ENCODE measurements at regions of chr12 and their contacts with region 1.

Region 1: DNA sequence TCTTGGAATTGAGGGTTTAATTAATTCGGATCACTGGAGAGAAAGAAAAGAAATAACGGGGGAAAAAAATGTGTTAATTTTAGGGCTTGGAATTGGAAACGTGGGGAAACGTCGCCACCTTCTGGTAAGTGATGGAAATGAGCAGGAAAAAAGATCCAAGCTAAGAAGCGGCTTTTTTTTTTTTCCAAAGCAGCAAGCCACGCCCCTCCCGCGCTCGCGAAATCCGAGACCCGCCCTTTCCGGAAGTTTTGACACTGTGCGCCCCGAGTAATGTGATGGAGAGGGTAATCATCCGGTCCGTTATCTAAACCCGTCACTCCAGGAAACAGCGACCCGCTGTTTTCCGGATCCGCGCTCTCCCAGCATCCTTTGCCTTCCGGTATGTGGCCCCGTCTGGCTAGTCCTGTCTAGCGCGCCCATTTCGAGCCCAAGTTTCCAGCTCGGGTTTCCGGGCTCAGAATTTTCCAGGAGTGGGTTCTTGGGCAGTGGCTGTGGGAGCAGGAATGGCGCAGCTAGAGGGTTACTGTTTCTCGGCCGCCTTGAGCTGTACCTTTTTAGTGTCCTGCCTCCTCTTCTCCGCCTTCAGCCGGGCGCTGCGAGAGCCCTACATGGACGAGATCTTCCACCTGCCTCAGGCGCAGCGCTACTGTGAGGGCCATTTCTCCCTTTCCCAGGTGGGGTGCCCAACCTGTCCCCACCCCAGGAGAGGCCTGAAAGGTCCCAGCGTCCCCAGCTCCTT is at the start of gene ALG10B:
- DNase-seq: peak; percentile 94
- H3K4me3 ChIP-seq: peak within 1 kb of the TSS; percentile 77 to 83 (median 83)
- H3K27ac ChIP-seq: peak within 1 kb of the TSS; percentile 70
- H3K4me1 ChIP-seq: no peaks in the 10 kb centered on the region
- H3K27me3 ChIP-seq: no peaks in the 10 kb centered on the region
- CTCF ChIP-seq: peak; percentile 38 to 56
- total RNA-seq, gene ALG10B: 7.7 to 8.5 TPM

Region 2: DNA sequence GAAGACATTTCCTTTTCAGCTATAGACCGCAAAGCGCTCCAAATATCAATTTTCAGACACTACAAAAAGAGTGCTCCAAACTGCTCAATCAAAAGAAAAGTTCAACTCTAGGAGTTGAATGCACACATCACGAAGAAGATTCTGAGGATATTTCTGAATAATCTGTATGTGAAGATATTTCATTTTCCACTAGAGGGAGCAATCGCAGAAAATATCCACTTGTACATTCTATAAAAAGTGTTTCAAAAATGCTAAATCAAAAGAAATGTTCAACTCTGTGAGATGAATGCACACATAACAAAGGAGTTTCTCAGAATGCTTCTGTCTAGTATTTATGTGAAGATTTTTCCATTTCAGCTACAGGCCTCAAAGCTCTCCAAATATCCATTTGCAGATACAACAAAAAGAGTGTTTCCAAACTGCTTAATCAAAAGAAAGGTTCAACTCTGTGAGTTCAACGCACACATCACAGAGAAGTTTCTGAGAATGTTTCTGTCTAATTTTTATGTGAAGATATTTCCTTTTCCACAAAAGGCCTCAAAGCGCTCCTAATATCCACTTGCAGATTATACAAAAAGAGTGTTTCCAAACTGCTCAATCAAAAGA is 643.8 kb before region 1 on chr12:
- CTCF ChIA-PET with region 1: no interaction called
- dilution Hi-C with region 1: no loop called
- in situ Hi-C with region 1: loop called in 1 of 2 experiments (anchors 25 kb)
- intact Hi-C with region 1: no loop called
- DNase-seq: peak; percentile 1
- H3K4me3 ChIP-seq: no peak overlapping the region
- H3K27ac ChIP-seq: no peak overlapping the region
- H3K4me1 ChIP-seq: no peaks in the 10 kb centered on the region
- H3K27me3 ChIP-seq: no peaks in the 10 kb centered on the region
- CTCF ChIP-seq: peak; percentile 15 to 37

Region 3: DNA sequence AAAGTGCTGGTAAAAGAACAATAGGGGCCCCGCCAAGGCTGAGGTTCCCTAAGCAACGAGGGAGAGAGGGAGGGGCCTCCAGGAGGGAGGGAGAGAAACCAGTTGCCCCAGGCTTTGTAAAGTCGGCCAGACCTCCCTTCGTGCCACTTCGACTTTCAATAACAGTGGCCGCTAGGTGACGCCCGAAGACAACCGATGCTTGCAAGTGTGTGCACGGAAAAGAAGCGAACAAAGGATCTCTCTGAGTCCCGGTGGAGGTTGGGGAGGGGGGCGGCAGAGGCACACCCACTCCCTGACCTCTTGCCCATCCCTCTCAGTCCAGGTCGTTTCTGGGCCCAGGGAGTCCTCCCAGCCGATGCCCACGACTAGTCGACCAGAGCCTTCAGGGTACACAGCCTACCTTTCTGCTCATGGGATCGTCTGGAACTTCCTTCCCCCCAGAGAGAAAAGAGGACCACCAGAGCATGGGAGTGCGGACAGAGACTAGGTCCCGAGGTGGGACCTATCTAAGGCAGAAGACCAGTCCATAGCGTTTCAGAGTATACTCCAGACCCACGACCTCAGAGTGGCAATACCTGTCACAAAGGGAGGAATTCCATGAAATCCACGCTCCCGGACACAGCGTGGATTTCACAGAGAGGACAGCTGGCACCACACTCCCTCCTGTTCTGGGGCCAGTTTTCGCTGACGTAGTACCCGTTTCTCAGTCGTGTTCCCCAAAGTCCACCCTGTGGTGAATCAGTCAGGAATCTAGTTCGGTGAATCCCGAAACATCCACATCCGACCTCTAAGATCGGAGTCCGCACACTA is 262.7 kb before region 1 on chr12:
- CTCF ChIA-PET with region 1: no interaction called
- dilution Hi-C with region 1: no loop called
- in situ Hi-C with region 1: loop called in 1 of 2 experiments (anchors 10 kb)
- intact Hi-C with region 1: loop called (anchors 1 kb)
- DNase-seq: peak; percentile 49
- H3K4me3 ChIP-seq: no peak overlapping the region
- H3K27ac ChIP-seq: no peak overlapping the region
- H3K4me1 ChIP-seq: no peaks in the 10 kb centered on the region
- H3K27me3 ChIP-seq: no peaks in the 10 kb centered on the region
- CTCF ChIP-seq: no peak

Region 4: GRCh38 chr12:38132139-38132538 is 184.4 kb before region 1 on chr12:
- CTCF ChIA-PET with region 1: no interaction called
- dilution Hi-C with region 1: no loop called
- in situ Hi-C with region 1: loop called (anchors 5 kb)
- intact Hi-C with region 1: no loop called
- DNase-seq: no peak
- H3K4me3 ChIP-seq: no peak overlapping the region
- H3K27ac ChIP-seq: no peak overlapping the region
- H3K4me1 ChIP-seq: no peaks in the 10 kb centered on the region
- H3K27me3 ChIP-seq: no peaks in the 10 kb centered on the region
- CTCF ChIP-seq: no peak

Region 5: GRCh38 chr12:38138225-38139221 is 178.0 kb before region 1 on chr12:
- CTCF ChIA-PET with region 1: no interaction called
- dilution Hi-C with region 1: no loop called
- in situ Hi-C with region 1: loop called (anchors 5 kb)
- intact Hi-C with region 1: loop called (anchors 1 kb)
- DNase-seq: peak; percentile 64
- H3K4me3 ChIP-seq: peak overlapping the region; percentile 61 to 87 (median 78)
- H3K27ac ChIP-seq: peak overlapping the region; percentile 52
- H3K4me1 ChIP-seq: no peaks in the 10 kb centered on the region
- H3K27me3 ChIP-seq: no peaks in the 10 kb centered on the region
- CTCF ChIP-seq: peak; percentile 89 to 98

Region 6: DNA sequence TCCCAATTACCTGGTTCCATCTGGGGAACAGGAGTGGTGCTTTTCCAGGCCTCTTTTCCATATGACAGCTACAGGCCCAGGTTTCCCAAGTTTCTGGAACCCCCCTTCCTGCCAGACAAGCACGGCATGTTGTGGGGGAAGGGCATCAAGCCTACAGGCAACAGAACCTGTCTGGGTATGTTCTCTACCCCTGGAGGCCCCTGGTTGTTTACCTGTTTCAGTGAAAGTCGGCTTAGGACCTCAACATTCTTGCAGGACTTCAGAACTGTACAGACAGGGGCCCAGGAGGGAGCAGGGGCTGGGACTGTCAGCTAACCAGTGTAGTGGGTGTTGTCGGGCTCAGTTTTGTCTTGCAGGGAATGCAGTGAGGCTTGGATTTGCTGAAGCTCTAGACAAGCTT is 111.0 kb before region 1 on chr12:
- CTCF ChIA-PET with region 1: no interaction called
- dilution Hi-C with region 1: no loop called
- in situ Hi-C with region 1: no loop called
- intact Hi-C with region 1: loop called (anchors 10 kb)
- DNase-seq: no peak
- H3K4me3 ChIP-seq: no peak overlapping the region
- H3K27ac ChIP-seq: no peak overlapping the region
- H3K4me1 ChIP-seq: no peaks in the 10 kb centered on the region
- H3K27me3 ChIP-seq: no peaks in the 10 kb centered on the region
- CTCF ChIP-seq: no peak

Region 7: DNA sequence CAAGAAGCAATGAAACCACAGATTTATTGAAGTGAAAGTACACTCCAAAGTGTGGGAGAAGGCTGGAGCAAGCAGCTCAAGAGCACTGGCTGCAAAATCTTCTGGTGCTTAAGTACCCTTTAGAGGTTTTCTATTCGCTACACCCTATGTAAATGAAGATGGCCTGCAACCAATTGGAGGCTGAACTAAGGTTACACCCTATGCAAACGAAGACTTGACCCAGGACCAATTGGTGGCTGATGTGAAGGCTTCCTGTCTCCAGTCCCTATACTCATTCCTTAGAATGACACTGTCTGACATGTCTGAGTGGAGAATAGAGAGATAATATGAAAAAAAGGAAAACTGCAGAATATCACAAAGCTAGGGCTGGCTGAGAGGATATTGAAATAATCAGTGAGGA is 57.2 kb after region 1 on chr12:
- CTCF ChIA-PET with region 1: no interaction called
- dilution Hi-C with region 1: no loop called
- in situ Hi-C with region 1: no loop called
- intact Hi-C with region 1: no loop called
- DNase-seq: no peak
- H3K4me3 ChIP-seq: no peak overlapping the region
- H3K27ac ChIP-seq: no peak overlapping the region
- H3K4me1 ChIP-seq: no peaks in the 10 kb centered on the region
- H3K27me3 ChIP-seq: no peaks in the 10 kb centered on the region
- CTCF ChIP-seq: no peak

Region 8: GRCh38 chr12:38384816-38385378 is 68.3 kb after region 1 on chr12:
- CTCF ChIA-PET with region 1: no interaction called
- dilution Hi-C with region 1: no loop called
- in situ Hi-C with region 1: no loop called
- intact Hi-C with region 1: no loop called
- DNase-seq: peak; percentile 98
- H3K4me3 ChIP-seq: no peak overlapping the region
- H3K27ac ChIP-seq: peak overlapping the region; percentile 32
- H3K4me1 ChIP-seq: peaks cover 8% of the 10 kb centered on the region
- H3K27me3 ChIP-seq: no peaks in the 10 kb centered on the region
- CTCF ChIP-seq: peak in 1 of 2 donors; percentile 32